Spleen (tissue), 13 donors: ENCODE measurements at regions of chr1 and their contacts with region 1.

Region 1: DNA sequence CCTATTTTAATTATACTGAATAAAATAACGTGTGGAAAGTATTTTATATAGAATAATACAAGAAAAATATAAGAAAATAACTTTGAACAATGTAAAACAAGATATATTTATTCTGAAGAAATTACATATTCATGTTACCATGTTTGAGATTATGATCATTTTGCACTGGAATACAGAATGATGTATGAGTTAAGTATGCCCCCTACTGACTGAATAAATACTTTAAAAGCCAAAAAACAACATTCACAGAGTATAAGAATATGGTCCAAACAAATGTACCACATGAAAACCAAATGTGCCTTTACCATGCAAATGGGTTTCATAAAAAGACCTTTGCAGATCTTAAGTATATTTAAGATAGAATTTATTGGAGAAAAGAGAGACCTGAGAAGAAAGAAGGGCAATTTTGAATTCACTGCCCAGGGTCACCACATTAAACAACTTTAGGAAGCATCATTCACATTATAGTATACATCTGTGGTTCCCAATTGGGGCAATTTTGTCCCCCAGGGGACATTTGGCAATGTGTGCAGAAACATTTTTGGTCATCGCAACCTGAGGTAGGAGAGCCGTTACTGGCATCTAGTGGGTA is 136.6 kb upstream of the GFI1 start:
- DNase-seq: no peak
- H3K4me3 ChIP-seq: no peak overlapping the region
- H3K27ac ChIP-seq: no peak overlapping the region
- H3K4me1 ChIP-seq: no peaks in the 10 kb centered on the region
- H3K27me3 ChIP-seq: no peaks in the 10 kb centered on the region
- CTCF ChIP-seq: peak in 8 of 11 experiments; percentile 11 to 53 (median 43)
- POLR2A ChIP-seq: no peak

Region 2: GRCh38 chr1:91997607-91998195 is 625.6 kb before region 1 on chr1:
- intact Hi-C with region 1: loop called (anchors 5 kb)
- DNase-seq: no peak
- H3K4me3 ChIP-seq: no peak overlapping the region
- H3K27ac ChIP-seq: no peak overlapping the region
- H3K4me1 ChIP-seq: no peaks in the 10 kb centered on the region
- H3K27me3 ChIP-seq: no peaks in the 10 kb centered on the region
- CTCF ChIP-seq: peak in 10 of 11 experiments; percentile 7 to 55 (median 45)
- POLR2A ChIP-seq: no peak

Region 3: GRCh38 chr1:92310185-92310597 is 313.1 kb before region 1 on chr1:
- intact Hi-C with region 1: loop called (anchors 5 kb)
- DNase-seq: no peak
- H3K4me3 ChIP-seq: no peak overlapping the region
- H3K27ac ChIP-seq: no peak overlapping the region
- H3K4me1 ChIP-seq: peaks cover 0 to 38% (median 3%) of the 10 kb centered on the region in 6 donors
- H3K27me3 ChIP-seq: no peaks in the 10 kb centered on the region
- CTCF ChIP-seq: peak; percentile 24 to 72 (median 54)
- POLR2A ChIP-seq: no peak